ENCODE measurements at regions of chr6 and their contacts with region 1.

Region 1: GRCh38 chr6:43053545-43054205 is at the start of gene CUL7:
- DNase-seq: peak; percentile 96 to 98 (median 97)
- ATAC-seq: peak; percentile 97 to 98
- H3K4me3 ChIP-seq: peak within 1 kb of the TSS; percentile 55
- H3K27ac ChIP-seq: peak within 1 kb of the TSS; percentile 78
- H3K4me1 ChIP-seq: peaks cover 2% of the 10 kb centered on the region
- H3K27me3 ChIP-seq: no peaks in the 10 kb centered on the region
- total RNA-seq, gene CUL7: 6.7 to 9.6 (median 9.2) TPM

Region 2: DNA sequence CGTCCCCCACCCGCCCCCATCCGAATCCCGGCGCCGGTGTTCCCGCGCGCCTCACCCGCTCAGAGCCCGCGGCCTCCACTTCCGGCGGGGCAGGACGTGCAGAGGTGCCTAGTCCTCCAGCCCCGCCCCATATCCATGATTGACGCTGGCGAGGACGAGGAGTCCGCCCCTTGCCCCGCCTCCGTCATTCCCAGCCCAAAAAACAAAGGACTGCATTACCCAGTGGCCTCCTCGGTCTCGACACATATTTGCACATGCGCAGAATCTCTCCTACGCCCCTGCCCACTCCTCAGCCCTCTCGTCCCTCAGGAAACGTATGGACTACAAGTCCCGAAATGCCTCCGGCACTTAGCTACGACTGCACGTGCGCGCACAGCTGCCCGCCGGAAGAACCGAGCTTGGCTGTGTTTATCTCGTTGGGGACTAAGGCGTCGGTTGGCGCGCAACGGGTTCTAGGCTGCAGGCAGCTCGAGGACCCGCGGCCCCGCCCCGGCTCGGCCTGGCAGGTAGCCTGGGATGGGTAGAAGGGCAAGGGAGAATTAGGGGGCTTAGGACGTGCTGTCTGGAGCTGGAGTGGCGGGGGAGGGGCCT is 39.7 kb before region 1 on chr6 and contains the starts of genes KLHDC3 and MEA1:
- intact Hi-C with region 1: loop called in 2 of 4 experiments (anchors 5 kb)
- DNase-seq: peak; percentile 99
- ATAC-seq: peak; percentile 96 to 97
- H3K4me3 ChIP-seq: peak within 1 kb of the TSS; percentile 78
- H3K27ac ChIP-seq: peak within 1 kb of the TSS; percentile 59
- H3K4me1 ChIP-seq: peaks cover 3% of the 10 kb centered on the region
- H3K27me3 ChIP-seq: no peaks in the 10 kb centered on the region
- total RNA-seq, gene KLHDC3: 97.3 to 176 (median 138) TPM
- total RNA-seq, gene MEA1: 29.9 to 44.4 (median 34.6) TPM

Region 3: GRCh38 chr6:43070028-43070632 is 16.5 kb after region 1 on chr6:
- intact Hi-C with region 1: no loop called
- DNase-seq: no peak
- ATAC-seq: no peak
- H3K4me3 ChIP-seq: no peak overlapping the region
- H3K27ac ChIP-seq: no peak overlapping the region
- H3K4me1 ChIP-seq: no peaks in the 10 kb centered on the region
- H3K27me3 ChIP-seq: no peaks in the 10 kb centered on the region

Measured in right cardiac atrium (tissue), 5 donors.